Psoas muscle (tissue), 8 donors: ENCODE measurements at regions of chr15 and their contacts with region 1.

Region 1: DNA sequence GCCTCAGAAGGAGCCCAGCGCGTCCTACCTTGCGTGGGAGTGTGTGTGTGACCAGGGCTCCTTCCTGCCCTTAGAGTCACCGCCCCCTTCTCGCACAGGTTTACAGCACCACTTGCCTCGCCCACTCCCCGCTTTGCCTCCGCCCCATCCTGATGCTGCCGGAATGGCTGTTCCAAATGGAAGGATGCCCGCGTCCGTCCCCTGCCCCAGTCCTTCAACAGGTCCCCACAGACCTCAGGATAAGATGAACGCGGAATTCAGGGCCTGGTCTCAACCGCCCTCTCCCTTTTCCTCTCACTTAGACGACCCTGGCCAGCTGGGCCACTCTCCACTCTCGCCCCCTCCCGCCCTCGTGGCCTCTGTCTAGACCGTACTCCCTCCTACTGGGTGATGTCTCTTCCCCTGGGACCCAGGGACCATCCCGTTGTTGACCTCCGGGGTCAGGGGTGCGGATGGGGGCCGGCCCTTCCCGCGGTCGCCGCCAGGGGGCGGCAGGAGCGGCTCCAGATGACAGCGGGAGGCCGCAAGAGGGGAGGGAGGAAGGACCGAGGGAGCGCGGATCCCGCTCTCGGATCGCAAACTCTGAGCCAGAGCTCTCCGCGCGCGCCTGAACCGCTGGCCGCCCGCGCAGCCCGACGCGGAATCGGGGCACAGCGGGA is at the start of gene THSD4:
- DNase-seq: peak; percentile 69 to 86
- ATAC-seq: peak; percentile 80 to 90 (median 86)
- H3K4me3 ChIP-seq: peak within 1 kb of the TSS; percentile 80
- H3K27ac ChIP-seq: peak within 1 kb of the TSS; percentile 33
- H3K4me1 ChIP-seq: no peaks in the 10 kb centered on the region
- H3K27me3 ChIP-seq: no peaks in the 10 kb centered on the region
- CTCF ChIP-seq: peak; percentile 98
- total RNA-seq, gene THSD4: 1.8 to 3.1 (median 2.5) TPM

Region 2: GRCh38 chr15:70636540-70637165 is 478.4 kb before region 1 on chr15:
- intact Hi-C with region 1: no loop called
- DNase-seq: no peak
- ATAC-seq: no peak
- H3K4me3 ChIP-seq: no peak overlapping the region
- H3K27ac ChIP-seq: no peak overlapping the region
- H3K4me1 ChIP-seq: no peaks in the 10 kb centered on the region
- H3K27me3 ChIP-seq: no peaks in the 10 kb centered on the region
- CTCF ChIP-seq: no peak

Region 3: DNA sequence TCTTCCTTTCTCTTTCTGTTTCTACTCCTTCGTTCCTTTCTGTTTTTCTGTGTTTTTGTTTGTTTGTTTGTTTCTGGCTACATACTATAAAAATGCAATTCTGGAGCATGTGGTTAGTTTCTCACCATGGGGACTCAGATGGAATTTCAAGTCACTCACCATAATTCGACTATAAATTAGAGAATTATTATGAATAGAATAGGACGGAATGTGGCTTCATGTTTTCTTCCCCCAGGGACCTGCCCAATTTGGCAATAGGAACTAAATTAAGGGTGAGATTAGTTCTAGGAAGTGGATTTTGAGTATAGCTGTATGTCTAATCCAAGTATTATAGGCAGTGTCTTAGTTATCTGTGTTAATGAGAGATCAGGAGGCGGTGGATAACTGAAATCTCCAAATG is 97.1 kb after region 1 on chr15:
- intact Hi-C with region 1: loop called in 1 of 2 experiments (anchors 5 kb)
- DNase-seq: no peak
- ATAC-seq: no peak
- H3K4me3 ChIP-seq: no peak overlapping the region
- H3K27ac ChIP-seq: no peak overlapping the region
- H3K4me1 ChIP-seq: no peaks in the 10 kb centered on the region
- H3K27me3 ChIP-seq: peaks cover 0 to 2% (median 0%) of the 10 kb centered on the region in 3 donors
- CTCF ChIP-seq: no peak

Region 4: DNA sequence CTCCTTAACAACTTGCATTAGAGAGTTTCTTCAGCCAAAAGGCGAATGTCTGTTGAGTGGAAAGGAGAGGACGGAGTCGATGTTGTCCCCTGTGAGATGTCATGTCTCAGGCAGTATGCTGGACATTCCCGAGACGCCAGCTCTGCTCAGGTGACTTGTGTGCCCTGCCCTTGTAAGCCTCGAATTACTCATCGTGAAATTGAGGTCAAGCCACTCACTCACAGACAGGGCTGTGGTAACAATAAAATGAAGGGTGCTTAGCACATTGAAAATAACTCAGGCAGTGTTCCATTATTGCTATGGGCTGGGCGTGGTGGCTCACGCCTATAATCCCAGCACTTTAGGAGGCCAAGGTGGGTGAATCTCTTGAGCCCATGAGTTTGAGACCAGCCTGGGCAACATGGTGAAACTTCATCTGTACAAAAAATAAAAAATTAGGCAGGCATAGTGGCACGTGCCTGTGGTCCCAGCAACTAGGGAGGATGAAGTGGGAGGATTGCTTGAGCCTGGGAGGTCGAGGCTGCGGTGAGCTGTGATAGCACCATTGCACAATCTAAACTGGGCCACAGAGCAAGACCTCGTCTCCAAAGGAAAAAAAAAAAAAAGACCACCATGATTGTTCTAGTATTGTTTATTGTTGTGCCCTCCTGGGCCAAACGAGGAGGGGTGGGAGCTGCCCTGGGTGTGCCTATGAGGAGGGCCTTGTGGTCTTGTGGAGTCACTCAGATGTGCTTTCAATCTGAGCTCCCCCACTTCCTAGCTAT is 214.7 kb after region 1 on chr15:
- intact Hi-C with region 1: loop called (anchors 5 kb)
- DNase-seq: peak; percentile 31 to 76
- ATAC-seq: peak; percentile 95 to 98 (median 96)
- H3K4me3 ChIP-seq: no peak overlapping the region
- H3K27ac ChIP-seq: peak overlapping the region; percentile 68
- H3K4me1 ChIP-seq: peaks cover 36% of the 10 kb centered on the region
- H3K27me3 ChIP-seq: no peaks in the 10 kb centered on the region
- CTCF ChIP-seq: no peak

Region 5: GRCh38 chr15:71443538-71443937 is 328.5 kb after region 1 on chr15:
- intact Hi-C with region 1: loop called (anchors 2 to 5 kb)
- DNase-seq: peak; percentile 41 to 68
- ATAC-seq: peak in 3 of 4 donors; percentile 34 to 68 (median 60)
- H3K4me3 ChIP-seq: no peak overlapping the region
- H3K27ac ChIP-seq: no peak overlapping the region
- H3K4me1 ChIP-seq: no peaks in the 10 kb centered on the region
- H3K27me3 ChIP-seq: no peaks in the 10 kb centered on the region
- CTCF ChIP-seq: peak; percentile 80